Endothelial cell of umbilical vein (primary cell): ENCODE measurements at regions of chr1 and their contacts with region 1.

Region 1: GRCh38 chr1:22976461-22977243 is 4.0 kb upstream of the LACTBL1 start:
- DNase-seq: peak; percentile 83
- H3K4me3 ChIP-seq: no peak overlapping the region
- H3K27ac ChIP-seq: no peak overlapping the region
- H3K4me1 ChIP-seq: peaks cover 12% of the 10 kb centered on the region
- H3K27me3 ChIP-seq: no peaks in the 10 kb centered on the region
- CTCF ChIP-seq: peak; percentile 81 to 87
- POLR2A ChIP-seq: no peak

Region 2: DNA sequence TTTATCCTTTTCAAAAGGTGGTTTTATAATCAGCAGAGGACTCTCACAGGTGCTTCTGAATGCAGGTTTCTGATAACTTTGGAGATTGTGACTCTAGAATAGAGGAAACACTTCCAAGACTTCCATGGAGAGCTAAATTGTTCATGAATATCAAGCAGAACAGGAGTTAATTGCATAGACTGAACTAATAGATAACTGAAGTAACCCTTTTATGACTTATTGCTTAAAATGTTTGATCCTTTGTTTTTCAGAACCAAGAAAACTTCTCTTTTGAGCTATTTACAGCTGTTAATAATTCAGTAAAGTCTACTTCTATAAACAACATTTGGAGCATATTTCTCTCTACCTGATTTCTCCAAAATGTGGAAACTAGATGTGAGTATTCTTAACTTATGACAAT is 19.1 kb after region 1 on chr1:
- CTCF ChIA-PET with region 1: no interaction called
- POLR2A ChIA-PET with region 1: no interaction called
- dilution Hi-C with region 1: no loop called
- intact Hi-C with region 1: no loop called
- DNase-seq: no peak
- H3K4me3 ChIP-seq: no peak overlapping the region
- H3K27ac ChIP-seq: no peak overlapping the region
- H3K4me1 ChIP-seq: no peaks in the 10 kb centered on the region
- H3K27me3 ChIP-seq: peaks cover 0 to 5% of the 10 kb centered on the region in 2 experiments
- CTCF ChIP-seq: no peak
- POLR2A ChIP-seq: no peak

Region 3: GRCh38 chr1:23081376-23081775 is 104.7 kb after region 1 on chr1:
- CTCF ChIA-PET with region 1: interaction called, 6 read pairs
- POLR2A ChIA-PET with region 1: no interaction called
- dilution Hi-C with region 1: no loop called
- intact Hi-C with region 1: loop called (anchors 5 kb)
- DNase-seq: no peak
- H3K4me3 ChIP-seq: no peak overlapping the region
- H3K27ac ChIP-seq: no peak overlapping the region
- H3K4me1 ChIP-seq: peaks cover 11% of the 10 kb centered on the region
- H3K27me3 ChIP-seq: no peaks in the 10 kb centered on the region
- CTCF ChIP-seq: peak in 1 of 2 donors; percentile 6
- POLR2A ChIP-seq: no peak

Region 4: GRCh38 chr1:23559136-23559984 is 582.7 kb after region 1 on chr1 and contains the start of gene ID3:
- CTCF ChIA-PET with region 1: no interaction called
- POLR2A ChIA-PET with region 1: no interaction called
- dilution Hi-C with region 1: no loop called
- intact Hi-C with region 1: no loop called
- DNase-seq: peak; percentile 98
- H3K4me3 ChIP-seq: peak within 1 kb of the TSS; percentile 69 to 94 (median 89)
- H3K27ac ChIP-seq: peak within 1 kb of the TSS; percentile 99
- H3K4me1 ChIP-seq: peaks cover 56% of the 10 kb centered on the region
- H3K27me3 ChIP-seq: no peaks in the 10 kb centered on the region
- CTCF ChIP-seq: no peak
- POLR2A ChIP-seq: peak; percentile 100
- total RNA-seq, gene ID3: 277 and 310 TPM in 2 replicates